SK-N-SH (cell line): ENCODE measurements at regions of chr7 and their contacts with region 1.

Region 1: GRCh38 chr7:74569501-74570075 is 87.9 kb upstream of the GTF2I start:
- DNase-seq: peak; percentile 70
- H3K4me3 ChIP-seq: no peak overlapping the region
- H3K27ac ChIP-seq: peak overlapping the region in 1 of 2 experiments; percentile 6; a peak in 1 of 4 replicates
- H3K4me1 ChIP-seq: peaks cover 0 to 8% of the 10 kb centered on the region in 2 experiments; a peak in 1 of 4 replicates
- H3K27me3 ChIP-seq: no peaks in the 10 kb centered on the region
- CTCF ChIP-seq: no peak
- EP300 ChIP-seq: no peak
- RAD21 ChIP-seq: no peak

Region 2: GRCh38 chr7:74412056-74412455 is 157.5 kb before region 1 on chr7:
- CTCF ChIA-PET with region 1: interaction called, 130 read pairs
- POLR2A ChIA-PET with region 1: no interaction called
- DNase-seq: no peak
- H3K4me3 ChIP-seq: no peak overlapping the region
- H3K27ac ChIP-seq: no peak overlapping the region
- H3K4me1 ChIP-seq: no peaks in the 10 kb centered on the region
- H3K27me3 ChIP-seq: no peaks in the 10 kb centered on the region
- CTCF ChIP-seq: no peak
- EP300 ChIP-seq: no peak
- RAD21 ChIP-seq: no peak

Region 3: GRCh38 chr7:74429153-74429747 is 140.3 kb before region 1 on chr7:
- CTCF ChIA-PET with region 1: interaction called, 130 read pairs
- POLR2A ChIA-PET with region 1: interaction called, 3 read pairs
- DNase-seq: peak; percentile 36
- H3K4me3 ChIP-seq: no peak overlapping the region
- H3K27ac ChIP-seq: no peak overlapping the region
- H3K4me1 ChIP-seq: peaks cover 0 to 8% of the 10 kb centered on the region in 2 experiments; a peak in 2 of 4 replicates
- H3K27me3 ChIP-seq: no peaks in the 10 kb centered on the region
- CTCF ChIP-seq: no peak
- EP300 ChIP-seq: no peak
- RAD21 ChIP-seq: no peak

Region 4: GRCh38 chr7:74449809-74450397 is 119.7 kb before region 1 on chr7:
- CTCF ChIA-PET with region 1: interaction called, 79 read pairs
- POLR2A ChIA-PET with region 1: no interaction called
- DNase-seq: peak; percentile 92
- H3K4me3 ChIP-seq: no peak overlapping the region
- H3K27ac ChIP-seq: no peak overlapping the region
- H3K4me1 ChIP-seq: peaks cover 0 to 8% of the 10 kb centered on the region in 2 experiments; a peak in 1 of 4 replicates
- H3K27me3 ChIP-seq: no peaks in the 10 kb centered on the region
- CTCF ChIP-seq: peak; percentile 91
- EP300 ChIP-seq: no peak
- RAD21 ChIP-seq: peak; percentile 84

Region 5: GRCh38 chr7:74502181-74502891 is 67.3 kb before region 1 on chr7:
- CTCF ChIA-PET with region 1: interaction called, 14 read pairs
- POLR2A ChIA-PET with region 1: no interaction called
- DNase-seq: no peak
- H3K4me3 ChIP-seq: no peak overlapping the region
- H3K27ac ChIP-seq: peak overlapping the region in 1 of 2 experiments; percentile 31; a peak in 1 of 4 replicates
- H3K4me1 ChIP-seq: peaks cover 0 to 33% of the 10 kb centered on the region in 2 experiments; a peak in 1 of 4 replicates
- H3K27me3 ChIP-seq: no peaks in the 10 kb centered on the region
- CTCF ChIP-seq: no peak
- EP300 ChIP-seq: no peak
- RAD21 ChIP-seq: no peak

Region 6: GRCh38 chr7:74554178-74554577 is 15.4 kb before region 1 on chr7:
- CTCF ChIA-PET with region 1: interaction called, 28 read pairs
- POLR2A ChIA-PET with region 1: no interaction called
- DNase-seq: no peak
- H3K4me3 ChIP-seq: no peak overlapping the region
- H3K27ac ChIP-seq: no peak overlapping the region
- H3K4me1 ChIP-seq: no peaks in the 10 kb centered on the region
- H3K27me3 ChIP-seq: no peaks in the 10 kb centered on the region
- CTCF ChIP-seq: no peak
- EP300 ChIP-seq: no peak
- RAD21 ChIP-seq: no peak